OCI-LY7 (cell line): ENCODE measurements at regions of chr14 and their contacts with region 1.

Region 1: GRCh38 chr14:105817971-105818711 is 291.8 kb downstream of the TMEM121 start:
- DNase-seq: peak; percentile 100
- H3K4me3 ChIP-seq: peak overlapping the region; percentile 51
- H3K27ac ChIP-seq: peak overlapping the region; percentile 98
- H3K4me1 ChIP-seq: peaks cover 74% of the 10 kb centered on the region
- CTCF ChIP-seq: no peak

Region 2: DNA sequence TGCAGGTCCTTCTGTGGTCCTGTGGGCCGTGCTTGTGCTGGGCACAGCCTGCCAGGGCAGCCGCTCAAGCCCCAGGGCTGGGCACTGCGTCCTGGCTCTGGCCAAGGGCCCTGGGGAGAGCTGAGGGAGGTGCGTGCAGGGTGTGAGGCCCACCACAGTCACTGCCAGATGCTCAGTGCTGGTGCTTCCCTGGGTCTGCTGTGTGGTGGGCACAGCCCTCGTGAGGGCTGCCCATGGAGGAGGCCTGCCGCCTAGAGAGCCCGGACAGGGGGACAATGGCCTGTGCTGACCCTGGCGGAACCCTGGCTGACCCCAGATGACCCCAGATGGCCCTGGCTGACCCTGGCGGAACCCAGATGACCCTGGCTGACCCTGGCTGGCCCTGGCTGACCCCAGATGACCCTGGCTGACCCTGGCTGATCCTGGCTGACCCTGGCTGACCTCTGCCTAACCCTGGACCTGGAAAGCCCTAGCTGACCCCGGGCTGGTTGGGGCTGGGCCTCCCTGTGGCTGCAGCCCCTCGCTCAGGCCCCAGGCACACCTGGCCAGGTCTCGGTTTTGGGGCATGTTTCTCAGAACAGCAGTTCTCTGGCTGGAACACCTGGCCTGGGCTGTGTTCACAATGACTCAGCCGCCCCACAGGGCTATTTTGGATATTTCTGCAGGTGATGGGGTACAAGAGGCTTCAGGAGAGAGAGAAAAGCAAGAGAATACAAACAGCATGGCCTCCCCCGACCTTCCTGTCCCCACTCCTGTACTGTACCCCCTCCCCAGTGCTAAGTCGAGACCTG is 236.4 kb before region 1 on chr14:
- CTCF ChIA-PET with region 1: no interaction called
- POLR2A ChIA-PET with region 1: interaction called, 3 read pairs
- intact Hi-C with region 1: loop called (anchors 5 kb)
- DNase-seq: peak; percentile 96
- H3K4me3 ChIP-seq: peak overlapping the region; percentile 18
- H3K27ac ChIP-seq: peak overlapping the region; percentile 99
- H3K4me1 ChIP-seq: peaks cover 76% of the 10 kb centered on the region
- CTCF ChIP-seq: no peak

Region 3: GRCh38 chr14:105700622-105701288 is 117.4 kb before region 1 on chr14:
- CTCF ChIA-PET with region 1: no interaction called
- POLR2A ChIA-PET with region 1: interaction called, 4 read pairs
- intact Hi-C with region 1: loop called (anchors 5 kb)
- DNase-seq: peak; percentile 95
- H3K4me3 ChIP-seq: peak overlapping the region; percentile 52
- H3K27ac ChIP-seq: peak overlapping the region; percentile 97
- H3K4me1 ChIP-seq: peaks cover 69% of the 10 kb centered on the region
- CTCF ChIP-seq: no peak

Region 4: GRCh38 chr14:105732748-105733622 is 85.2 kb before region 1 on chr14:
- CTCF ChIA-PET with region 1: no interaction called
- POLR2A ChIA-PET with region 1: no interaction called
- intact Hi-C with region 1: no loop called
- DNase-seq: no peak
- H3K4me3 ChIP-seq: no peak overlapping the region
- H3K27ac ChIP-seq: no peak overlapping the region
- H3K4me1 ChIP-seq: peaks cover 6% of the 10 kb centered on the region
- CTCF ChIP-seq: no peak

Region 5: GRCh38 chr14:105839425-105840265 is 21.5 kb after region 1 on chr14:
- CTCF ChIA-PET with region 1: no interaction called
- POLR2A ChIA-PET with region 1: interaction called, 29 read pairs
- intact Hi-C with region 1: no loop called
- DNase-seq: no peak
- H3K4me3 ChIP-seq: no peak overlapping the region
- H3K27ac ChIP-seq: no peak overlapping the region
- H3K4me1 ChIP-seq: peaks cover 5% of the 10 kb centered on the region
- CTCF ChIP-seq: no peak

Region 6: DNA sequence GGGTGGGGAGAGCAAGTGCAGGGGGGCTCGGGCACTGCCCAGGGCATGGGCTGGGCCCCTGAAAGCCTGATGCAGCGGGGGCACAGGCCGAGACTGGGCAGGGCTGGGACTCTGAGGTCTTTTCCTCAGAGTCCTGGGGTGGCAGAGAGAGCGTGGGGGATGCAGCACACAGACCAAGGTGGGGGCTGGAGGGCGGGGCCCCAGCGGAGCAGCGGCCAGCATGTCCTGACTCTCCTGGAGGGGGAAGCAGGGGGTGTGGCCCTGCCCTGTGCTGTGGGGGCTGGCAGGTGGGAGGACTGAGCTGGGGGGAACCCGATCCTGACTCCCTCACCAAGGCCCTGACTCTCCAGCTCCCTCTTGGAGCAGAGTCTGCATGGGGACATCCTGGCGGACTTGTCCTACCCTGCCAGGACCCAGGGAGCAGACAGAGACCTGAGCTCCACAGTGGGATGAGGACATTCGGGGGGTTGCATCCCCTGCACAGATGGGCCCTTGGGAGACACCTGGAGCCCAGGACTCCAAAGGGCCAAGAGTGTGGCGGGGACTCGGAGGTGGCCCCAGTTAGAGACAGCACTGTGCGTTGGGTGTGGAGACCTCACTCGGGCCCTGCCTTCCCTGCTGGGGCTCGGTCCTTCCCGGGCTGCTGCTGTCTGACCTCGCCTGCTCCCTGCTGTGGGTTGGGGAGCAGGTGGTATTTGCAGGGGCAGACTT is 34.4 kb after region 1 on chr14:
- CTCF ChIA-PET with region 1: no interaction called
- POLR2A ChIA-PET with region 1: interaction called, 20 read pairs
- intact Hi-C with region 1: loop called (anchors 1 kb)
- DNase-seq: peak; percentile 78
- H3K4me3 ChIP-seq: no peak overlapping the region
- H3K27ac ChIP-seq: peak overlapping the region; percentile 96
- H3K4me1 ChIP-seq: peaks cover 48% of the 10 kb centered on the region
- CTCF ChIP-seq: no peak

Region 7: DNA sequence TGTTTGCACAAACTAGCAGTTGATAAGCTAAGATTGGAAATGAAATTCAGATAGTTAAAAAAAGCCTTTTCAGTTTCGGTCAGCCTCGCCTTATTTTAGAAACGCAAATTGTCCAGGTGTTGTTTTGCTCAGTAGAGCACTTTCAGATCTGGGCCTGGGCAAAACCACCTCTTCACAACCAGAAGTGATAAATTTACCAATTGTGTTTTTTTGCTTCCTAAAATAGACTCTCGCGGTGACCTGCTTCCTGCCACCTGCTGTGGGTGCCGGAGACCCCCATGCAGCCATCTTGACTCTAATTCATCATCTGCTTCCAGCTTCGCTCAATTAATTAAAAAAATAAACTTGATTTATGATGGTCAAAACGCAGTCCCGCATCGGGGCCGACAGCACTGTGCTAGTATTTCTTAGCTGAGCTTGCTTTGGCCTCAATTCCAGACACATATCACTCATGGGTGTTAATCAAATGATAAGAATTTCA is 43.9 kb after region 1 on chr14:
- CTCF ChIA-PET with region 1: no interaction called
- POLR2A ChIA-PET with region 1: interaction called, 20 read pairs
- intact Hi-C with region 1: no loop called
- DNase-seq: peak; percentile 98
- H3K4me3 ChIP-seq: peak overlapping the region; percentile 100
- H3K27ac ChIP-seq: peak overlapping the region; percentile 100
- H3K4me1 ChIP-seq: peaks cover 5% of the 10 kb centered on the region
- CTCF ChIP-seq: no peak